Activated naive CD4-positive, alpha-beta T cell treated with anti-CD3 and anti-CD28 coated beads for 36 hours (primary cell): ENCODE measurements at regions of chr9 and their contacts with region 1.

Region 1: GRCh38 chr9:89522261-89522958 is 24.5 kb upstream of the SEMA4D start:
- DNase-seq: peak; percentile 89
- H3K4me3 Mint-ChIP-seq: peak overlapping the region; percentile 58
- H3K27ac Mint-ChIP-seq: peak overlapping the region; percentile 96
- H3K4me1 Mint-ChIP-seq: peaks cover 93% of the 10 kb centered on the region
- H3K27me3 Mint-ChIP-seq: no peaks in the 10 kb centered on the region

Region 2: DNA sequence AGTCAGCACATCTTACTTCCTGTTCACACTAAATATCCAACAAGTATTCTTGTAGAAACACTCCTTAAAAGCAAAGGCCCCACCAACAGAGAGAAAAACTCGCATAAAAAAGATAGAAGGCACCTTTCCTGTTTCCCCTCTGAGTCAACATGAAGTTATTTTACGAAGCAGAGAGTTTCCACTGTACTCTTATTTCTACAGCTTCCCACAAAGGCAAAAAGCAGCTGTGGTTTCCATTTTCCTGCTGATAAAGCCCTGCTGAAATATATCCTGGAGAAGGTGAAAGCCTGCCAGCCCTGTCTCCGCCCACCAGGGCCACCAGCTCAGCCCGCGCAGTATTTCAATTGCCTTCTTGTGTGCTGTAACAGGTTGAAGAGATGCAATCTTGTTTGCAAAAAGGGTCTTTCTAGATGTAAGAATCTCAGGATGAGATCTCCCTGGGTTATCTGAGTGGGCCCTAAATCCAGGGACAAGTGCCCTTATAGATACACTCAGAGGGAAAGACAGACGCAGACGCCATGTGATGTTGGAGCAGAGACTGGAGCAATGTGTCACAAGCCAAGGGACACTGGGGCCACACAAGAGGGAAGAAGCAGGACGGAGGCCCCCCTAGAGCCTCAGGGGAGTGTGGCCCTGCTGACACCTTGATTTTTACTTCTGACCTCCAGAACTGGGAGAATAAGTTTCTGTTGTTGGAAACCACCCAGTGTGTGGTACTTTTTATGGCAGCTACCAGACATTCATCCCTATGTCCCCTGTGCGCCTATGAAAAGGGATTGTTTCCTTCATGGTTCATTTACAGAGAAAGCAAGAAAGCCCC is 44.4 kb before region 1 on chr9:
- CTCF ChIA-PET with region 1: interaction called, 4 read pairs
- intact Hi-C with region 1: loop called (anchors 1 kb)
- DNase-seq: peak; percentile 73
- H3K4me3 Mint-ChIP-seq: peak overlapping the region; percentile 78
- H3K27ac Mint-ChIP-seq: peak overlapping the region; percentile 97
- H3K4me1 Mint-ChIP-seq: peaks cover 89% of the 10 kb centered on the region
- H3K27me3 Mint-ChIP-seq: no peaks in the 10 kb centered on the region

Region 3: DNA sequence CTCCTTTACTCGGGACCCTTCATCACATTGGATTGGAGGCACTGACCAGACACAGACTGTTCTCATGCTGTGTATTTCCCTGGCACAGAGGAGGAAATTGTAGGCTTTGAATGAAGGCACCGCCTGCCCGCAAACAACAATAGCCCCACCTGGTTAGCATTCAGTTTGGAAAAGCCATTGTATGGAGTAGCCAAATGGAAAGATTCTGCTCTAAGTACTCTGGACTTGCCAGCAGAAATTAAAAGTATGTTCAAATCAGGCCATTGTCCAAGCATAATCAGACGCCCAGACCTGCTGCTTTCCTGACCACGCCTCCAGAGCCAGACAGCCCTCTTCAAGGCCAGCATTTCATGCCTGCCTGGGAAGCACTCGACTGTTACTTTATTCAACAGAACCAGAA is 16.5 kb before region 1 on chr9:
- CTCF ChIA-PET with region 1: interaction called, 5 read pairs
- intact Hi-C with region 1: loop called (anchors 1 kb)
- DNase-seq: no peak
- H3K4me3 Mint-ChIP-seq: no peak overlapping the region
- H3K27ac Mint-ChIP-seq: peak overlapping the region; percentile 24
- H3K4me1 Mint-ChIP-seq: peaks cover 80% of the 10 kb centered on the region
- H3K27me3 Mint-ChIP-seq: no peaks in the 10 kb centered on the region

Region 4: GRCh38 chr9:89602978-89603766 is 80.8 kb after region 1 on chr9:
- CTCF ChIA-PET with region 1: no interaction called
- intact Hi-C with region 1: no loop called
- DNase-seq: peak; percentile 95
- H3K4me3 Mint-ChIP-seq: peak overlapping the region; percentile 84
- H3K27ac Mint-ChIP-seq: peak overlapping the region; percentile 50
- H3K4me1 Mint-ChIP-seq: peaks cover 34% of the 10 kb centered on the region
- H3K27me3 Mint-ChIP-seq: peaks cover 3% of the 10 kb centered on the region